ENCODE measurements at regions of chr15 and their contacts with region 1.

Region 1: DNA sequence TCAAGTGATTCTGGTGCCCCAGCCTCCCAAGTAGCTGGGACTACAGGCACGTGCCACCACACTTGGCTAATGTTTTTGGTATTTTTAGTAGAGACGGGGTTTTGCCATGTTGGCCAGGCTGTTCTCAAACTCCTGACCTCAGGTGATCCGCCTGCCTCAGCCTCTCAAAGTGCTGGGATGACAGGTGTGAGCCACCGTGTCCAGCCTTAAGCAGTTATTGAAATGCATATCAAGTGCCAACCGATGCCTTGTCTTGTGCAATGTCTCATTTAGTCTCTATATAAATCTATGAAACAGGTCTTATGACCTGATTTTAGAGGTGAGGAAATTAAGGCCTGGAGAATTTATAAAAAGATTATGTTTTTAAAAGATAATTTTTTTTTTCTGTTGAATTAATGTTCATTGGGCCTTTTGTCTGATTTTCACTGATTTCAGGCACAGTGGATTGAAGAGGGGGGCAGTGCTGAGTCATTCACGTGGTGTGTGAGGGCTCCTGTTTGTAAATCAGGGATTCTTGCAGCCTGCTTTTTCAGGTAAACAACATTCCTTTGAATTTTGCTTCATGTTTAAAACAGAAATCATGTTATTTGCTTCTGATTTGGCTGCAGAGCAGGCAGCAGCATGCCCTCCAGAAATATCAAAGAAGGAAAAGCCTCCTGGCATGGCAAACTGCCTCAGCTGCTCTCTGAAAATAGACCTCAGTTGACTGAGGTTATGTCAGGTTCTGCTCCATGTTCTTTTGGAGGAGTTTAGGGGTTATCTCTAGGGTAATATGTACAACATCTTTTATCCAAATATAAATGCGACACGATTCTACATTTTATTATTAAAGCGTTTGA is 407.0 kb upstream of the RGMA start:
- DNase-seq: no peak
- H3K4me3 ChIP-seq: no peak overlapping the region
- H3K27ac ChIP-seq: no peak overlapping the region
- H3K4me1 ChIP-seq: no peaks in the 10 kb centered on the region
- H3K27me3 ChIP-seq: no peaks in the 10 kb centered on the region
- CTCF ChIP-seq: no peak
- EP300 ChIP-seq: no peak
- POLR2A ChIP-seq: no peak

Region 2: DNA sequence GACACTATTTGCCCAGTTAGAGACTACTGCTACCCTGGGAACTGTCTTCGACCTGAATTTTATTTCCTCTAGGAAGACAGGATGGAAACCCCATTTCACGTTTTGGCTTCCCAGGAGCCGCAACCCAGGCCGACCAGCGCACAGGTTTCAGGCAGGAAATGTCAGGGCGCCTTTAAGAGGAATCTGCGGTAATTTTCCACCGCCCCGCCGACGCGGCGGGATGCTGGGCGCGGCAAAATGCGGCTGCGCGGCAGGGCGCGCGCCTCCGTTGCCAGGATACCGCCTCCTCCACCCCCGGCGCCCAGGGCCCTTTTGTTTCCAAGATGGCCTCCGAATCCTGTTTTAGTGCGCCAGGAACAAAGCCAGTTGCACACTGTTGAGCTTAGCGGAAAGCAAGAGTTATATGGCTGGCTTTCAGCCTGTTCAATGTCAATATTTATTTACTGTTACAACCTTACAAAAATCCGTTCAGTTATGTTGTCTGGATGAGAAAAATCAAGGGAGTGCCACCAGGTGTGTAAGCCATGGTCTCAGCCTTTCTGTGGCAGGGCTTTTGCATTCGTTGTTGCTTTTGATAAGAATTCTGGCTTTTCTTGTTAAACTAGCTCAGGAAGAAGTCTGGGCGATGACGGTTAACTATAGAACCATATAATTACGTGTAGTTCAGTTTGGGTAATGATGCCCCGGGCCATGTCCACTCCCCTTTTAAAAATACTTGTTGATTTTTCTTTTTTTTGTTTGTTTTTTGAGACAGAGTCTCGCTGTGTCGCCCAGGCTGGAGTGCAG is 675.6 kb before region 1 on chr15:
- in situ Hi-C with region 1: no loop called
- intact Hi-C with region 1: no loop called
- DNase-seq: peak; percentile 95
- H3K4me3 ChIP-seq: peak overlapping the region in 3 of 4 donors; percentile 17 to 45 (median 25)
- H3K27ac ChIP-seq: peak overlapping the region; percentile 85 to 92 (median 88)
- H3K4me1 ChIP-seq: peaks cover 4 to 62% (median 39%) of the 10 kb centered on the region in 4 donors
- H3K27me3 ChIP-seq: no peaks in the 10 kb centered on the region
- CTCF ChIP-seq: no peak
- EP300 ChIP-seq: peak; percentile 18
- POLR2A ChIP-seq: peak; percentile 70

Region 3: GRCh38 chr15:93524432-93524831 is 28.4 kb after region 1 on chr15:
- in situ Hi-C with region 1: no loop called
- intact Hi-C with region 1: loop called (anchors 2 kb)
- DNase-seq: no peak
- H3K4me3 ChIP-seq: no peak overlapping the region
- H3K27ac ChIP-seq: no peak overlapping the region
- H3K4me1 ChIP-seq: no peaks in the 10 kb centered on the region
- H3K27me3 ChIP-seq: no peaks in the 10 kb centered on the region
- CTCF ChIP-seq: no peak
- EP300 ChIP-seq: no peak
- POLR2A ChIP-seq: no peak

Measured in transverse colon (tissue), 4 donors.